Panc1 (cell line): ENCODE measurements at regions of chr16 and their contacts with region 1.

Region 1: DNA sequence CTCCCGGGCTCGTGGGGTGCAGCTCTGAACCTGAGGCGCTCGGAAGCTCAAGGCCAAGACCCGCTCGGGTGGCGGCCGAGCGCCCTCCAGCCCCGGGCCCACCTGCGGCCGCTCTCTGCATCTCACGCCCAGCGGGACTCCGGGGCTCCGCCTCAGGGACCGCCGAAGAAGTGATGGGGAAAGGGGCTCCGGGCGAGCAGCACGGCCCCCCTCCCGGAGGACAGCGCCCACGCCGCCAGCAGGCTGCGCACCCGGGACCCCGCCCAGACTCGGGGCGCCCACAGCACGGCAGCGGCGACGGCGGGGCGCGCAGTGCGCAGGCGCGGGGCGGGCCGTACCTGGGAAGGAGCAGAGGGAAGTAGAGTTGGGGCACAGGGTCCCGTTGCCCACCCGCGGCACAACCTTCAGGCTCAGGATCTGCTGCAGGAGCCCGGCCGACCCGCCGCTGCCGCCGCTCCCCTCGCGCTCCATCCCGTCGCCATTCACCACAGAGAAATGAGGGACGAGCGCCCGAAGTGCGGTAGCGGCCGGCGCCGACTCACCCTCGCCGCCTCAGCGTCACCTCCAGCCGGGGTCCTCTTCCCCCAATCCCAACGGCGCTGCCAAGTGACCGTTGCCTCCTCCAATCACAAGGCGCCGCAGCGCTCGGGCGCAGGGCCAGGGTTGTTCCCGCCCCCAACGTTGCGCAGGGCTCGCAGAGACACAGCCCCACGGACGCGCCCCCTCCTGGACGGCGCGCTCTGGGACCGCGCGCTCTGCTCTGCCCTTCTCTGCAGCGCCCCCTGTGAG is at the start of gene TMEM170A:
- DNase-seq: peak; percentile 87
- ATAC-seq: peak; percentile 97
- H3K4me3 ChIP-seq: peak within 1 kb of the TSS; percentile 65 to 68
- H3K27ac ChIP-seq: peak within 1 kb of the TSS; percentile 75
- H3K4me1 ChIP-seq: no peaks in the 10 kb centered on the region; the same call in 1 of the 2 replicates
- H3K27me3 ChIP-seq: no peaks in the 10 kb centered on the region
- CTCF ChIP-seq: peak; percentile 99
- total RNA-seq, gene TMEM170A: 19.0 TPM

Region 2: DNA sequence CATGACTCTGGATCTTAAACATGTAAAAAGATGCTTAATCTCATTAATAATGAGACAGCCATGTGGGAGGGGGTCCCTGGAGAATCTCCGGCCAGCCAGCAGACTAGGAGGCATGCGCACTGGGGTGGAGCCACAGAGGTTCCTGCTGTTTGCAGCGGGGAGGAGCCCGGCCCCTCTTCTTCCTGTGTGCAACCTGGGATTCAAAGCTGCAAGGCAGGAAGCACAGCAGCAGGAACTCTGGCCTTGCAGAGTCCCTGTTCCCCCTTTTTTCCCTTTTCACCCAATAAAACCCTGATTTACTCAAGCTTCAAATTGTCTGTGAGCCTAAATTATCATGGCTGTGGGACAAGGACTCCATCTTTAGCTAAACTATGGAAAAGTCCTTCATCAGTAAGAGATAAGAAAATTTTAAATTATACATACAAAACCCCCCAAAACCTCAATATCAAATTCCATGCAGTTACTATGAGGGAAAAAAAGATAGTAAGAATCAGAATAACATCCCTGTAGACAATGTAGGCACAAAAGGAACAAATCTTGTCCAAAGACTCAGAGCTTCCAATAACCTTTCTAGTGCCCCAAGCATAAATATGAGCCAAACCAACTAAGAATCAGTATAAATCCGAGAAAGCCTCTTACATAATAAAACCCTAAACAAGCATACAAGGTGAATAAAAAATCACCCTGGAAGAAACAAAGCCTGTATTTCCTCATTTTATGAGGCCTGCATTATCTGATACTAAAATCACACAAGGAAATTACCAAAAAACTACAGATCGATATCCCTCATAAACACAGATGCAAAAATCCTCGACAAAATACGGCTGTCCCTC is 43.1 kb before region 1 on chr16:
- CTCF ChIA-PET with region 1: no interaction called
- POLR2A ChIA-PET with region 1: no interaction called
- in situ Hi-C with region 1: no loop called
- intact Hi-C with region 1: no loop called
- DNase-seq: no peak
- ATAC-seq: peak; percentile 97
- H3K4me3 ChIP-seq: peak overlapping the region; percentile 5 to 29; a peak in 2 of 4 replicates
- H3K27ac ChIP-seq: peak overlapping the region; percentile 74; the same call in 1 of the 2 replicates
- H3K4me1 ChIP-seq: peaks cover 11% of the 10 kb centered on the region
- H3K27me3 ChIP-seq: no peaks in the 10 kb centered on the region
- CTCF ChIP-seq: no peak

Region 3: DNA sequence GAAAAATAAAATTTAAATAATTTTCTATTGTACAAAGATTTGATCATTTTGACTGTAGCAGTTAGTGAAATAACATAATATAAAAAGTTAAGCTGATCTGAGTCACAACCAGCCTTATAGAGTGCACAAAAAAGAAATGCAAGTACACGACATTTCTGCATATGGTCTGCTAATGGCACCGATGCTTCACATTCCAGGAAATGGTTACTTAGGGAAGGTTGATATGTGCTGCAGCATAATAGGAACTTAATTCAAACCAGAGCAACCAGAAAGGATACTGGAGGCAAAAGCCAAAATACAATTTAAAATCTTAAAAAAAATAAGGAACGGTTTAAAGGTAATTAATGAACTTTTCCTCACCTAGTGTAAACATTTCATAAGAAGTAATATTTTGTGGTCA is 21.0 kb before region 1 on chr16:
- CTCF ChIA-PET with region 1: no interaction called
- POLR2A ChIA-PET with region 1: interaction called, 14 read pairs
- in situ Hi-C with region 1: no loop called
- intact Hi-C with region 1: no loop called
- DNase-seq: no peak
- ATAC-seq: no peak
- H3K4me3 ChIP-seq: no peak overlapping the region
- H3K27ac ChIP-seq: no peak overlapping the region
- H3K4me1 ChIP-seq: no peaks in the 10 kb centered on the region
- H3K27me3 ChIP-seq: no peaks in the 10 kb centered on the region
- CTCF ChIP-seq: no peak

Region 4: GRCh38 chr16:75555707-75556430 is 91.5 kb after region 1 on chr16 and contains the start of gene TMEM231:
- CTCF ChIA-PET with region 1: interaction called, 17 read pairs
- POLR2A ChIA-PET with region 1: no interaction called
- in situ Hi-C with region 1: no loop called
- intact Hi-C with region 1: no loop called
- DNase-seq: no peak
- ATAC-seq: peak; percentile 95
- H3K4me3 ChIP-seq: peak within 1 kb of the TSS; percentile 74 to 79
- H3K27ac ChIP-seq: peak within 1 kb of the TSS; percentile 82
- H3K4me1 ChIP-seq: no peaks in the 10 kb centered on the region
- H3K27me3 ChIP-seq: no peaks in the 10 kb centered on the region
- CTCF ChIP-seq: no peak
- total RNA-seq, gene TMEM231: 9.0 TPM

Region 5: DNA sequence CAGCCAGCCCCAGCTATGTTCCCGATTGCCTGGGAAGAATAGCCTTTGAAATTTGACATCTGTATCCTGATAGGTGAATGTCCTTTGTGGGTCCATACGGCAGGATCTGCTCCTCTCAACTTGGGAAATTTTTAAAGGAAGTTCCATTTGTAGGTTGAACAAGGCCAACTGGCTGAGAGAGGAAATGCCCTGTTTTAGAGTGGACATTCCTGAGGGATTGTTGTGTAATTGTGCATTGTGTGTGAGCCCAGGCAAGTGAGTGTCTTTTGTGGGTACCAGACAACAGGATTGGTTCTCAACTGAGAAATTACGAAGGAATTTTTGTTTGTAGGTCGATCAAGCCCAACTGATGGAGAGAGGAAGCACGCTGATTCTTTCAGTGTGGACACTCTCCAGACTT is 215.0 kb after region 1 on chr16:
- CTCF ChIA-PET with region 1: no interaction called
- POLR2A ChIA-PET with region 1: no interaction called
- in situ Hi-C with region 1: no loop called
- intact Hi-C with region 1: no loop called
- DNase-seq: no peak
- ATAC-seq: no peak
- H3K4me3 ChIP-seq: no peak overlapping the region
- H3K27ac ChIP-seq: no peak overlapping the region
- H3K4me1 ChIP-seq: no peaks in the 10 kb centered on the region
- H3K27me3 ChIP-seq: no peaks in the 10 kb centered on the region
- CTCF ChIP-seq: no peak